Lower lobe of right lung (tissue), 2 donors: ENCODE measurements at regions of chr12 and their contacts with region 1.

Region 1: DNA sequence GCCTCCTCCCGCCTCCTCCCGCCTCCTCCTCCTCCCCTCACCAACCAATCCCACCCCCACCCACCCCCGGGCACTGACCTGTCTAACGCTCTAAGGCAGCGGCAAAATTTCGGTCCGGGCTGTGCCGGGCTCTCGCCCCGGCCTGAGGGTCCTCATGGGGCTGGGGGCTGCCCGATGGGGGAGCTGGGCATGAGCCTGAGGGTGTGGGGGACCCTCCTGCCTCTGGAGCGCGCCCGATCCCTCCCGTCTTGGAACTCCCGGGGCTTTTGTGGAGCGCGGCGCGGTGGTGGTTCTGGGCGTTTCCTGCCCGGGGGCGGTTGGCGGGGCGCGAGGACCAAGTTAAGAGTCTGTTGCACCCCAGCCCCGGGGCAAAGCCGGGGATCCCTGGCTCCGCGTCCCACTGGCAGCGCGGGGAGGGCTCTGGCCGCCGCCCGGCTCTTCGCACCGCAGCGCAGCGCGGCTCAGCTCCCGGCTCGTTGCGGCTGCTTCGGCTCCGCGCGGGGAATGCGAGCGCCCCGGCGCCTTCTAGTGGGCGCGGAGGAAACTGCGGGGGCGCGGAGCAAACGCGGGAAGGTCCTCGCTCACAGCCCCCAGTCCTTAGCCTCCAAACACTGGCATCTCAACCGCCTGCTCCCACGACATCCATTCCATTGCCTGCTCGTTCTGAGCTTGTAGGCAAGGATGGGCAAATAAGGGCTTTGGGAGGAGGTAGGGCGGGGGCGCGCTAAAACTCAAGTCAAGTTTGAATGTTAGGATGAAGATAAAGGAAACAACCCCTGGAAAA is at the start of gene B4GALNT1:
- DNase-seq: peak; percentile 71
- ATAC-seq: peak; percentile 92 to 96
- H3K4me3 ChIP-seq: peak within 1 kb of the TSS; percentile 65
- H3K27ac ChIP-seq: no peak within 1 kb of the TSS
- H3K4me1 ChIP-seq: peaks cover 21% of the 10 kb centered on the region
- H3K27me3 ChIP-seq: peaks cover 60% of the 10 kb centered on the region
- CTCF ChIP-seq: peak; percentile 94
- total RNA-seq, gene B4GALNT1: 0.89 TPM

Region 2: GRCh38 chr12:57583008-57583831 is 49.7 kb before region 1 on chr12:
- intact Hi-C with region 1: loop called (anchors 10 kb)
- DNase-seq: no peak
- ATAC-seq: peak; percentile 93 to 96
- H3K4me3 ChIP-seq: no peak overlapping the region
- H3K27ac ChIP-seq: no peak overlapping the region
- H3K4me1 ChIP-seq: no peaks in the 10 kb centered on the region
- H3K27me3 ChIP-seq: peaks cover 3% of the 10 kb centered on the region
- CTCF ChIP-seq: peak; percentile 90

Region 3: DNA sequence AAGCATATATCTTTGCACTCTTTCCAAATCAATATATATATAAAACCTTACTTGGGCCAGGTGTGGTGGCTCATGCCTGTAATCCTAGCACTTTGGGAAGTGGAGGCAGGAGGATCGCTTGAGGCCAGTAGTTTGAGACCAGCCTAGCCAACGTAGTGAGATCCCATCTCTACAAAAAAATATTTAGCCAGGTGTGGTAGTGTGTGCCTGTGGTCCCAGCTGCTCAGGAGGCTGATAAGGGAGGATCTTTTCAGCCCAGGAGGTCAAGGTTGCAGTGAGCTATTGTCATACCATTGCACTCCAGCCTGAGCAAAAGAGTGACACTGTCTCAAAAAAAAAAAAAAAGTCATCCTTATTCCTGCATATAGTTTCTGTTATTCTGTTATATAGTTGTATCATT is 75.4 kb after region 1 on chr12:
- intact Hi-C with region 1: no loop called
- DNase-seq: no peak
- ATAC-seq: no peak
- H3K4me3 ChIP-seq: no peak overlapping the region
- H3K27ac ChIP-seq: no peak overlapping the region
- H3K4me1 ChIP-seq: no peaks in the 10 kb centered on the region
- H3K27me3 ChIP-seq: no peaks in the 10 kb centered on the region
- CTCF ChIP-seq: no peak